CD8-positive, alpha-beta T cell (primary cell): ENCODE measurements at regions of chr9 and their contacts with region 1.

Region 1: DNA sequence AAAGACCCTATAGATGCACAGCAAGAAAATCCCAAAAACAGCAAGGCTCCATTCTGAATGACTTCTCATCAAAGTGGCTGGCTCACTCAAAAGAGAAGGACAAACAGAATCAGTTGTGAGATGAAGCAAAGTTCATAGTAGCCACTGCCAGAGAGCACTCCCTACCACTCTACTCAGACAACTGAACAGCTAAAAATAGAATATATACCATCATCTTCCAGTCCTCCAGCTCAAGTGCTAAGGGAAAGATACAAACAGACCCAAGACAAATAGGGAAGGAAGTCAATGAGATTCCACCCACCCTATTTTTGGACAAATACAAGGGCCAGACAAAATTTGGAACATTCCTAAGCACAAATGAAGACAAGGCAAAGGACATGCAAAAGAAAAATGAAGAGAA is 20.6 kb downstream of the GNAQ start:
- DNase-seq: no peak
- ATAC-seq: no peak
- H3K4me3 ChIP-seq: no peak overlapping the region
- H3K4me3 Mint-ChIP-seq: peak overlapping the region; percentile 13
- H3K27ac ChIP-seq: no peak overlapping the region
- H3K27ac Mint-ChIP-seq: peak overlapping the region; percentile 58
- H3K4me1 ChIP-seq: peaks cover 31% of the 10 kb centered on the region
- H3K4me1 Mint-ChIP-seq: peaks cover 61% of the 10 kb centered on the region
- H3K27me3 ChIP-seq: no peaks in the 10 kb centered on the region
- H3K27me3 Mint-ChIP-seq: no peaks in the 10 kb centered on the region
- CTCF ChIP-seq: no peak

Region 2: DNA sequence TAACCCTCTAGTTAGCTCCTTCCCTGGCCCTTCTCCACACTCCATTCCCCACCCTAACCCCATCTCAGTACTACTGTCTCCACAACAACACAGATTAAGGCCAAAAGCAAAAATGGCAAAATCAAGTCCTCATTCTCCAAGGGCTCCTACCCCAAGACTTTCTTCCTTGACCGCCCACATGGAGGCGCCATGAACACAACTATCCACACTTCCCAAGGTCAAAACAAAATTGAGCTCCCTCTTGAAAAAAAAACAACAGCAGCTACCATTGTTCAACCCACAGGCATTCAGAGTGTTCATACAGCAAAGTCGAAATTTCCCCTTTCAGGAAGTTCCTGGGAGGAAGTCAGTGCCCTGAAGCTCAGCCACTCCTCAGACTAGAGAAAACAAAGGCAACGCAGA is 33.8 kb before region 1 on chr9:
- CTCF ChIA-PET with region 1: no interaction called
- POLR2A ChIA-PET with region 1: no interaction called
- intact Hi-C with region 1: loop called in 1 of 2 experiments (anchors 5 kb)
- DNase-seq: peak in 8 of 9 experiments; percentile 19 to 73 (median 45)
- ATAC-seq: peak; percentile 53
- H3K4me3 ChIP-seq: no peak overlapping the region
- H3K4me3 Mint-ChIP-seq: peak overlapping the region; percentile 60
- H3K27ac ChIP-seq: peak overlapping the region in 1 of 2 experiments; percentile 68
- H3K27ac Mint-ChIP-seq: peak overlapping the region; percentile 78
- H3K4me1 ChIP-seq: peaks cover 48% of the 10 kb centered on the region
- H3K4me1 Mint-ChIP-seq: peaks cover 54% of the 10 kb centered on the region
- H3K27me3 ChIP-seq: no peaks in the 10 kb centered on the region
- H3K27me3 Mint-ChIP-seq: no peaks in the 10 kb centered on the region
- CTCF ChIP-seq: no peak